ENCODE measurements at regions of chr9 and their contacts with region 1.

Region 1: GRCh38 chr9:3525836-3526164 is at the start of gene RFX3:
- DNase-seq: peak; percentile 70 to 94
- H3K4me3 ChIP-seq: peak within 1 kb of the TSS; percentile 92 to 93
- H3K27ac ChIP-seq: peak within 1 kb of the TSS; percentile 99 to 100
- H3K4me1 ChIP-seq: peaks cover 0 to 17% of the 10 kb centered on the region in 2 donors
- H3K27me3 ChIP-seq: no peaks in the 10 kb centered on the region
- CTCF ChIP-seq: no peak
- total RNA-seq, gene RFX3: 4.0 TPM

Region 2: DNA sequence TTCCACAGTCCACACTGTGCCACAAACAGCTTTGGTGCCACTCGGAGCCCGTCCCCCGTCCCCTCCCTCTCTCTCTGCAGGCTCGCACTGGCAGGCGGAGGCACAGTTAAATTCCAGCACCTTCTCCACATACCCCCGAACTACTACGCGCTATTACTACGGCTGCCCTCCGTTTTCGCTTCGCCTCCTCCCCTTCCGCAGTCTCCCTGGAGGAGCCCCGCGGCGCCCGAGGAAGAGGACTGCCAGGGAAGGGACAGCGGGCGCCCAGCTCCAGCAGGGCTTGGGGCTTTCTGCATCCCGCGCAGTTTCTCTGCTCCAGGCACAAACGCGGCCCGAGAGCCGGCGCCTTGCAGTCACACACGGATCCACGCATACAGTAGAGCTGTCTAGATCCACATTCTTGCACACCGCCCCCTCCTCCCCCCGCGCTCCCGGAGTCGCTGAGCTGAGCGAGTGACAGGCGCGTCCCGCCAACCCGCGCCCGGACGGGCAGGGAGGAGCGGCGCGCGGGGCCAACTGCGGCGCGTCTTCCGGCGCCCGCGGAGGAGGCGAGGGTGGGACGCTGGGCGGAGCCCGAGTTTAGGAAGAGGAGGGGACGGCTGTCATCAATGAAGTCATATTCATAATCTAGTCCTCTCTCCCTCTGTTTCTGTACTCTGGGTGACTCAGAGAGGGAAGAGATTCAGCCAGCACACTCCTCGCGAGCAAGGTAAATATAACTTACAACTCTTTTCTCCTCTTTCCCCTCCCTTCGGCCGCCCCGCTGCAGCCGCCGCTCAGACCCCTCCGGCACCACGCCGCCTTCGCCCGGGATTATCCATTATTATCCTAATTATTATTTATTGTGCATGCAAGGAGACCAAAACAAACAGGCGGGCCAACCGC is 1510.9 kb before region 1 on chr9 and contains the start of gene SMARCA2:
- intact Hi-C with region 1: loop called (anchors 2 kb)
- DNase-seq: peak; percentile 95 to 99
- H3K4me3 ChIP-seq: peak within 1 kb of the TSS; percentile 92 to 96
- H3K27ac ChIP-seq: peak within 1 kb of the TSS; percentile 99 to 100
- H3K4me1 ChIP-seq: peaks cover 0 to 19% of the 10 kb centered on the region in 2 donors
- H3K27me3 ChIP-seq: no peaks in the 10 kb centered on the region
- CTCF ChIP-seq: no peak
- total RNA-seq, gene SMARCA2: 160 TPM

Region 3: DNA sequence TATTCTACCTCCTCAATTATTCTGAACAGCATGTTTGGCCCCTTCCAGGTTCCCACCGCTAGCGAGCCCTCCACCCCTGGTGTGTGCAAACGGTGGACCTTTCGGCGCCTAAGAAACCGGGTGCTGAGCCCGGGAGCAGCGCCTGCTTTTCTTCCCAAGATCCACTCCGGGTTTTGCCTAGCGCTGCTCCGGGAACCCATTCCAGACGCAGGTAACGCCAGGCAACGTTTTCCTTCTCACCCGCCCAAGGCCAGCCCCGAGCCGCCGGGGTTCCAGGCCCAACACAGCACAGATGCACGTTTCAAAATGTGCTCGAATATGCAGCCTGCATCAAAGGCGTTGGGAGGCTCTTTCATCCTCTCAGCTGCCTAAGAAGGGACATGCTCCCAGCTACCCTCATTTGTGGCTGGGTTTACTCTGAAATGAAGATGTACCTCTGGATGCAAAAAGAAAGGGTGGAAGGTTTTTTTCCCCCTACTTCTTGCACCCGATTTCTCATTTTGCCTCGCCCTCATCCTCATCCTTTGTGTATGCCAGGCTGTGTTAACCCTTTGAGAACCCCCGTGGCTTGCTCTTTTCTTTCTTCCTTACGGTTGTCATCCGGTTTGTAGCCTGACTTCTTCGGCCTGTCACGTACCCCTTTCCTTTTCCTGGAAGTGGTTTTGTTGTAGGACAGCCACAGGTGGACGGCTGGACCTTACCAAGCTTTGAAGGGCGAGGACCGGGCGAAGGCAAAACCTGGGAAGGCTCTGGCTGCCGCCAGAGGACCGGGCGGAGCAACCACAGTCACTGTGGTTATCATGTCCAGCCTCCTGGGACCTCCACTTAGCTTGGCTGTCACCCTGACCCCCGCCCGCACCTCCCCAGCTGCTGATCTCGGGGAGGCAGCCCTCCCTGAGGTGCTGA is 1283.7 kb before region 1 on chr9:
- intact Hi-C with region 1: loop called (anchors 5 kb)
- DNase-seq: peak; percentile 23 to 84
- H3K4me3 ChIP-seq: peak overlapping the region; percentile 52 to 66
- H3K27ac ChIP-seq: no peak overlapping the region
- H3K4me1 ChIP-seq: peaks cover 3% of the 10 kb centered on the region in 2 donors
- H3K27me3 ChIP-seq: no peaks in the 10 kb centered on the region
- CTCF ChIP-seq: peak in 1 of 3 experiments; percentile 6

Region 4: DNA sequence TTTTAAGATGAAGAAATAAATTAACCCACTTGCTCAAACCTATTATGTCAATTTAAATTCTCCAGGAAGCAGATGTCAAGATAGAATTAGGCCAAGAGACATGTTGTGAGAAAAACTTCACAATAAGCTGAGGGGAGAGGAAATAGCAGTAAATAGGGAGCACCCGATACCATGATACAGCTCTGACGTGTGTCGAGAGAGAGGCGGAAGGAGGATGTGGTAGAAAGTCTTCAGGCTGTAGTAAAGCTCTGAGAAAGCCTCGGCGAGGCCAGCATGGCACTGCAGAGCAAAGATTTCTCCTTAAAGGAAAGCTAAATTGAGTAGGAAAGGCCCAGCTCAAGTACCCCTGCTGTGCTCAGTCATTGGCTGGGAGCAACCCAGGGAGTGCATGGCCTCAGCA is 675.9 kb before region 1 on chr9:
- intact Hi-C with region 1: loop called (anchors 10 kb)
- DNase-seq: no peak
- H3K4me3 ChIP-seq: no peak overlapping the region
- H3K27ac ChIP-seq: no peak overlapping the region
- H3K4me1 ChIP-seq: peaks cover 0 to 6% of the 10 kb centered on the region in 2 donors
- H3K27me3 ChIP-seq: no peaks in the 10 kb centered on the region
- CTCF ChIP-seq: no peak

Region 5: GRCh38 chr9:4297151-4297785 is 771.5 kb after region 1 on chr9:
- intact Hi-C with region 1: loop called (anchors 2 kb)
- DNase-seq: peak; percentile 61 to 91
- H3K4me3 ChIP-seq: peak overlapping the region; percentile 68 to 77
- H3K27ac ChIP-seq: peak overlapping the region; percentile 97 to 99
- H3K4me1 ChIP-seq: peaks cover 12 to 26% of the 10 kb centered on the region in 2 donors
- H3K27me3 ChIP-seq: no peaks in the 10 kb centered on the region
- CTCF ChIP-seq: peak in 2 of 3 experiments; percentile 40 to 61

Region 6: GRCh38 chr9:4679268-4680172 is 1153.7 kb after region 1 on chr9 and contains the start of gene CDC37L1:
- intact Hi-C with region 1: loop called (anchors 5 kb)
- DNase-seq: peak; percentile 87 to 99
- H3K4me3 ChIP-seq: peak within 1 kb of the TSS; percentile 79 to 91
- H3K27ac ChIP-seq: peak within 1 kb of the TSS; percentile 97 to 98
- H3K4me1 ChIP-seq: peaks cover 0 to 16% of the 10 kb centered on the region in 2 donors
- H3K27me3 ChIP-seq: no peaks in the 10 kb centered on the region
- CTCF ChIP-seq: peak; percentile 61 to 76 (median 76)
- total RNA-seq, gene CDC37L1: 17.2 TPM

Region 7: DNA sequence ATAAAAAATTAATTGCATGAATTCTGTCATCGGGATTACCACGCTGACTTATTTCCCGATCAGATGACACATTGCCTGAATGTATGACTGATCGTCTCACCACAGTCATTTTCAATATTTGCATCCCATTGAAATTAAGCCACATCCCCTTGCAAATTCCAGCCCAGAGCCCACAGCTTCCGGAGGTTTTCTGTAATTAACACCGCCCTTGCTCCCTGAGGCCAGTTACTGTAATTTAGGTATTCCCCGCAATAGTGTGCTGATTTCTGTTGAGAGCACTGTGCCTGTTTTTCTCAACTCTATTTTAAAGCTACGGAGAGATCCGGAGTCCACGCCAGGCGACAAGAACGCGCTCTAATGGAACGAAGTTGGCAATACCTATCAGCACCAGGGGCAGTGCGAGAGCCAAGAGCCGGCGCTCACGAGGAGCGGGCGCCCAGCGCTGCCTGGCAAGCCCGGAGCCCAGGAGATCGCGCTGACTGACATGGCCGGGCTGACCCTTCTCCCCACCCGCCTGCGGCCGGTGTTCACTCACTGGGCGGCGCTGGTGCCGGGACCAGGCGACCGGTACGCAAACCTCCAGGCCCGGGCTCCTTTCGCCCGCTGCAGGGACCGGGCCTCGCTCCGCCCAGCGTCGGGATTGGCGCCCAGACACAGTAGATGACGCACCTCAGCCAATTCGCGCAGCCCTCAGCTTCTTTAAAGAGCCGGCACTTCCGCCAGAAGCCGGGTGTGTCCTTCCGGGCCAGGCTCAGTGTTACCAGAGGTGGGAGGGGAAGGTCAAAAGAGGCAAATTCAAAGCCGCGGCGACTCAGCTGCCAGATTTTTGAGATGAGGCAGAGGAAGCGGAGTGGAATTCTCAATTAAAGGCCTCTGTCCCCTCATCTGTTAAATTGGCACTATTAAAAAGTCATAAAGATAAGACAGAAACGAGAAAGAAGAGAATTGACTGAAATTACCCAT is 1911.7 kb after region 1 on chr9 and contains the start of gene PLGRKT:
- intact Hi-C with region 1: loop called (anchors 10 kb)
- DNase-seq: peak; percentile 85 to 98
- H3K4me3 ChIP-seq: peak within 1 kb of the TSS; percentile 75 to 77
- H3K27ac ChIP-seq: peak within 1 kb of the TSS; percentile 91 to 93
- H3K4me1 ChIP-seq: peaks cover 0 to 9% of the 10 kb centered on the region in 2 donors
- H3K27me3 ChIP-seq: no peaks in the 10 kb centered on the region
- CTCF ChIP-seq: peak in 2 of 3 experiments; percentile 25 to 39
- total RNA-seq, gene PLGRKT: not detected

Measured in ascending aorta (tissue), 2 donors.